Aorta (tissue), 5 donors: ENCODE measurements at regions of chr4 and their contacts with region 1.

Region 1: GRCh38 chr4:27861381-27862201 is 1001.0 kb downstream of the STIM2 start:
- DNase-seq: no peak
- ATAC-seq: no peak
- H3K4me3 ChIP-seq: no peak overlapping the region
- H3K27ac ChIP-seq: no peak overlapping the region
- H3K4me1 ChIP-seq: no peaks in the 10 kb centered on the region
- H3K27me3 ChIP-seq: no peaks in the 10 kb centered on the region

Region 2: DNA sequence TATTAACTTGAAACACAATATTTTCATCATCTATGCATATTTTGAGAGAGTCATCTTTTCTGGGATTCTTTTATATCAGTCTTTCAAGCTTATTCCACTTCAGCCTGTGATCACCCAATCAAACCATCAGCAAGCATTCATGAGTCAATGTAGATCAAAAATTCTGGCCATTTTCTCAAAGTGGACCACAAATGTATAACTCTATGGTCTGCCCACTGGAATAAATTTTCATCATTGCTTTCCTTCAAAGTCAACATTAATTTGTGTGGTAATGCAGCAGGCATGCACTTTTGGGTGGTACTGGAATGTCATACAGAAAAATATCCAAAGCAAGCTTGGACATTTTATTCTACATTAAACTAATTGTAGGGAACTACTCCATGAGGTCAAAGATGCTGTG is 12.0 kb after region 1 on chr4:
- intact Hi-C with region 1: loop called in 1 of 2 experiments (anchors 1 kb)
- DNase-seq: no peak
- ATAC-seq: no peak
- H3K4me3 ChIP-seq: no peak overlapping the region
- H3K27ac ChIP-seq: no peak overlapping the region
- H3K4me1 ChIP-seq: no peaks in the 10 kb centered on the region
- H3K27me3 ChIP-seq: no peaks in the 10 kb centered on the region